Ascending aorta (tissue), 2 donors: ENCODE measurements at regions of chr20 and their contacts with region 1.

Region 1: GRCh38 chr20:37907677-37908401 is 4.9 kb downstream of the VSTM2L start:
- DNase-seq: no peak
- H3K4me3 ChIP-seq: no peak overlapping the region
- H3K27ac ChIP-seq: no peak overlapping the region
- H3K4me1 ChIP-seq: peaks cover 0 to 4% of the 10 kb centered on the region in 2 donors
- H3K27me3 ChIP-seq: peaks cover 14% of the 10 kb centered on the region
- CTCF ChIP-seq: no peak

Region 2: GRCh38 chr20:37999526-38000263 is 91.9 kb after region 1 on chr20:
- intact Hi-C with region 1: loop called (anchors 5 kb)
- DNase-seq: no peak
- H3K4me3 ChIP-seq: no peak overlapping the region
- H3K27ac ChIP-seq: no peak overlapping the region
- H3K4me1 ChIP-seq: no peaks in the 10 kb centered on the region
- H3K27me3 ChIP-seq: no peaks in the 10 kb centered on the region
- CTCF ChIP-seq: no peak